Panc1 (cell line): ENCODE measurements at regions of chr7 and their contacts with region 1.

Region 1: DNA sequence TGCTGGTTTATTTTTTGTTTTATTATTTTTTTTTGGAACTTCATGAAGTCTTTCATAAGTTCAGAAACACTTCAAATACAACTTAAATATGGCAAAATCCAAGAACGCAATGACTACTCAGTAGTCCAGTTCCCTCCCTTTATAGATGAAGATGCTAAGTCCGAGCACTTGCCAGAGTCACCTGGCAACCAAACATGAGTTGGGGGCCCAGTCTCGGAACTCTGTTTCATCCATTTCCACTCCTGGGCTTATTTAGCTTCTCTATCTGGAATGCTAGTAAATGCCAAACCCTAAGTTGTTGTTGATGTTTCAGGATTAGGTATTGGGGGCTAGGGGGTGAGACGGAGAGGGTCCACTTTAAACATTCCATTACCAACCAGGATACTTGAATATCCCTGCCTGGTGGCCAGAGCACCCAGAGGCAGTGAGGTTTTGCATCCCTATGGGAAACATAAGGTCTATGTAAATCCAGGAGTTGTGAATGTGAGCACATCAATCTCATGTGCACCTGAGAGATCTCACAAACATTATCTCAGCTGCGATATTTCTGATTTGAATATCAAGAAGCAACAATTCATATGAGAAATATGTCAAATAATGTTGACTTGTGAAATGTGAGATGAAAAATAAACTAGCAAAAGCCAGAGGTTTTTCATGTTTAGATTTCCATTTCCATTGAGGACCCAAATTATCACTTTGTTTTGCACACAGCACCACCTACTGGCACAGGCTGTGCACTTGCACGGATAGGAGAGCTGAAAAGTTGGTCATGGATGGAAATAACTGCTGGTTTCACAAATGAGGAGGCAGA is 129.3 kb downstream of the PKD1L1 start:
- DNase-seq: peak; percentile 82
- ATAC-seq: peak; percentile 90
- H3K4me3 ChIP-seq: no peak overlapping the region
- H3K27ac ChIP-seq: peak overlapping the region; percentile 96
- H3K4me1 ChIP-seq: peaks cover 48% of the 10 kb centered on the region
- H3K27me3 ChIP-seq: no peaks in the 10 kb centered on the region
- CTCF ChIP-seq: peak; percentile 96

Region 2: DNA sequence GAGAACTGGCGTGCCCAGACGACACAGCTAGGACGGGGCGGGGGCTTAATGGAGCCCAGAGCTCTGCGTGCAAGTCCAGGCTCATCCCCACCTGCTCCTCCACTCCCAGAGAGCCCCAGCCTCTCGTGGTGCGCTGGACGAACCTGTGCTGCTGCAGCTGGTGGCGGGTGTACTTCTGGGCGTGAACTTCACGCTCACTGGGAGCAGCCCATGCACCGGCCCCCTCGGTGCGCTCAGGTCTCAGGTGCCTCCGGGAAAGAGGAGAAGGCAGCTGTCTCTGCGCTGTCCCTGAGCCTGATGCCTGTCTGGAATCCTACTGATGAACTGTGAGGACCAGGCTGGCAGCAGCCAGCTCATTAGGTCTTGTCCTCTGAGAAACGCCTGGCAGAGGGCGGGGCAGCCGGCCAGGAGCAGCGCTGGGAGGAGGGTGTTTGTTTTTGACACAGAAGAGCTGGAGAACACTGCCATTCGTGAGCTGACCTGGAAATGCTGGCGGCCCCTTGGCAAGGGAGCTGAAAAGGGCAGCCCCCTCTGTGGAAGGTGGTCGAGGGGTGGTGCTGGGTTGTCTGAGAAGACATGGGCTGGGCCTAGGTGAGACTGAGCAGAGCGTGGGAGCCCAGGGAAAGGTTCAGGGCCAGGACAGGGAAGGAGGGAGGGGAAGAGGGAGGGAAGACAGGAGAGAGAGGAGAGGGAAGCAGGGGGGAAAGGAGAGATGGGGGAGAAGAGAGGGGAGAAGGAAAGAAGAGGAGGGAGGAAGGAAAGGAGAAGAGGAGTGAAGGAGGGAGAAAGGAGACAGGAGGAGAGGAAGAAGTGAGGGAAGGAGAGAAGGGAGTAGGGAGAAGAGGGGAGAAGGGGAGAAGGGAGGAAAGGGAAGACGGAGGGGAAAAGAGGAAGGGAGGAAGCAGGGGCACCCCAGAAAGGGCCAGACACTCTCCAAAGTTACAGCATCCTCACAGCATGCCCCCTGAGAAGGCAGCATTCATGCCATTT is 183.6 kb before region 1 on chr7:
- CTCF ChIA-PET with region 1: interaction called, 3 read pairs
- POLR2A ChIA-PET with region 1: no interaction called
- in situ Hi-C with region 1: no loop called
- intact Hi-C with region 1: loop called (anchors 10 kb)
- DNase-seq: no peak
- ATAC-seq: peak; percentile 81
- H3K4me3 ChIP-seq: peak overlapping the region; percentile 29 to 53
- H3K27ac ChIP-seq: peak overlapping the region; percentile 96
- H3K4me1 ChIP-seq: peaks cover 77% of the 10 kb centered on the region
- H3K27me3 ChIP-seq: no peaks in the 10 kb centered on the region
- CTCF ChIP-seq: no peak

Region 3: GRCh38 chr7:47763063-47763974 is 55.7 kb before region 1 on chr7:
- CTCF ChIA-PET with region 1: interaction called, 5 read pairs
- POLR2A ChIA-PET with region 1: no interaction called
- in situ Hi-C with region 1: no loop called
- intact Hi-C with region 1: loop called (anchors 2 kb)
- DNase-seq: peak; percentile 96
- ATAC-seq: peak; percentile 91
- H3K4me3 ChIP-seq: peak overlapping the region in 1 of 2 experiments; percentile 15; a peak in 1 of 4 replicates
- H3K27ac ChIP-seq: peak overlapping the region; percentile 100
- H3K4me1 ChIP-seq: peaks cover 38% of the 10 kb centered on the region
- H3K27me3 ChIP-seq: no peaks in the 10 kb centered on the region
- CTCF ChIP-seq: no peak; the same call in 1 of the 2 replicates

Region 4: DNA sequence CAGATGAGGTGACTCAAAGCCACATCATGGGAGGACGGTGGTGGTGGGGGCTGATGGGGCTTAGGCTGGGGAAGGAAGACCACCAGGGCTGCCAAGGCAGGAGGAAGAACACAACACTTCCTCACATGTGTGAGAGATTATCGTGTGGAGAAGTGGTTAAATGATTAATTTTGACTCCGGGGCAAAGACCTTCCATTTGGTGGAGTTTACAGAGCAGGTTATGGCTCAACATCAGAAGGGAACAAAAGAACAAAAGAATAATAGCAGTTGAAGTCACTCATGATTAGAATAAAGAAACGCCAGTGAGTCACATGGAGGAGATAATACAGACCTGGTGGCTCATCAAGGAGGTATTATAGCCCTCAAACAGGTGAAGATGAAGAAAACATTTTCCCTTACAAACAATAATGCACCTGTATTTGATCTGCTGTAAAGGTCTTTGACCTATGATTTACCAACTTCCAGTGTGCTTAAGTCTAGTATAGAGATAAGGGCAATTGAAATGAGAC is 40.8 kb before region 1 on chr7:
- CTCF ChIA-PET with region 1: no interaction called
- POLR2A ChIA-PET with region 1: no interaction called
- in situ Hi-C with region 1: no loop called
- intact Hi-C with region 1: loop called (anchors 5 kb)
- DNase-seq: no peak
- ATAC-seq: no peak
- H3K4me3 ChIP-seq: no peak overlapping the region
- H3K27ac ChIP-seq: peak overlapping the region; percentile 100
- H3K4me1 ChIP-seq: peaks cover 20% of the 10 kb centered on the region
- H3K27me3 ChIP-seq: no peaks in the 10 kb centered on the region
- CTCF ChIP-seq: no peak

Region 5: DNA sequence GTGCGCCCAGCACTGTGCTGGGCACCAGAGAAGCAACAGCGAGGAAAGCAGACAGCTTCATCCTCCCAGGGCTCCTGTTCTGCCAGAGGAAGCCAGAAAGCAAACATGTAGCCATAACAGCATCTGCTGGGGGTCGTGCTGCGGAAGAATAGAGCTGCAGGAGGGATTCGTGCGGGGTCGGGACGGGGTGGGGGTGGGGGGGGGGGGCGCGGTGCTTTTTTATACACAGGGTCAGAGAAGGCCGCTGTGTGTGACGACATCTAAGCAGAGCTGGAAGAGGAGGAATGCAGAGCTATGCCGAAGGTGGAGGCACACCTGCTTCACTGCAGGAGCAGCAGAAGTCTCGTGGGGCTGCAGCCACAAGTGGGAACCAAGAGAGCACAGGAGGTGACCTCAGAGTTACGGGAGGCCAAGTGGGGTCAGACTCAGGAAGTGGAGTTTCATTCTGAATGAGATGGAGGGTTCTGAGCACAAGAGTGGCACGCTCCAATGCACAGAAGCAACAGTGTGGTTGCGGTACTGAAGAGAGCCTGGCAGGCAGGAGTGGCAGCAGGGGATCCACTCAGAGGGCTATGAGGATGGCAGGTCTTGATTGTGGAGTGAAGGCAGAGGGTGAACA is 118.2 kb after region 1 on chr7:
- CTCF ChIA-PET with region 1: interaction called, 3 read pairs
- POLR2A ChIA-PET with region 1: interaction called, 11 read pairs
- in situ Hi-C with region 1: no loop called
- intact Hi-C with region 1: no loop called
- DNase-seq: no peak
- ATAC-seq: 0 out of 2 replicates have a peak, but pooled peaks have one; percentile 8
- H3K4me3 ChIP-seq: no peak overlapping the region
- H3K27ac ChIP-seq: peak overlapping the region; percentile 86
- H3K4me1 ChIP-seq: peaks cover 50% of the 10 kb centered on the region
- H3K27me3 ChIP-seq: no peaks in the 10 kb centered on the region
- CTCF ChIP-seq: no peak